GM12878 (cell line): ENCODE measurements at regions of chr18 and their contacts with region 1.

Region 1: GRCh38 chr18:10908760-10909159 is 240.6 kb downstream of the PIEZO2 start:
- DNase-seq: no peak
- ATAC-seq: no peak
- H3K4me3 ChIP-seq: no peak overlapping the region
- H3K27ac ChIP-seq: no peak overlapping the region
- H3K4me1 ChIP-seq: no peaks in the 10 kb centered on the region
- H3K27me3 ChIP-seq: no peaks in the 10 kb centered on the region
- CTCF ChIP-seq: no peak
- EP300 ChIP-seq: no peak
- POLR2A ChIP-seq: no peak
- RAD21 ChIP-seq: no peak

Region 2: GRCh38 chr18:10604182-10604581 is 304.6 kb before region 1 on chr18:
- CTCF ChIA-PET with region 1: no interaction called
- POLR2A ChIA-PET with region 1: no interaction called
- RAD21 ChIA-PET with region 1: no interaction called
- SMC1A ChIA-PET with region 1: no interaction called
- in situ Hi-C with region 1: no loop called
- intact Hi-C with region 1: no loop called
- DNase-seq: no peak
- ATAC-seq: peak; percentile 45; the same call in 1 of the 3 replicates
- H3K4me3 ChIP-seq: no peak overlapping the region
- H3K27ac ChIP-seq: no peak overlapping the region; the same call in 1 of the 2 replicates
- H3K4me1 ChIP-seq: no peaks in the 10 kb centered on the region; the same call in 1 of the 2 replicates
- H3K27me3 ChIP-seq: no peaks in the 10 kb centered on the region
- CTCF ChIP-seq: no peak
- EP300 ChIP-seq: no peak
- POLR2A ChIP-seq: no peak
- RAD21 ChIP-seq: no peak

Region 3: DNA sequence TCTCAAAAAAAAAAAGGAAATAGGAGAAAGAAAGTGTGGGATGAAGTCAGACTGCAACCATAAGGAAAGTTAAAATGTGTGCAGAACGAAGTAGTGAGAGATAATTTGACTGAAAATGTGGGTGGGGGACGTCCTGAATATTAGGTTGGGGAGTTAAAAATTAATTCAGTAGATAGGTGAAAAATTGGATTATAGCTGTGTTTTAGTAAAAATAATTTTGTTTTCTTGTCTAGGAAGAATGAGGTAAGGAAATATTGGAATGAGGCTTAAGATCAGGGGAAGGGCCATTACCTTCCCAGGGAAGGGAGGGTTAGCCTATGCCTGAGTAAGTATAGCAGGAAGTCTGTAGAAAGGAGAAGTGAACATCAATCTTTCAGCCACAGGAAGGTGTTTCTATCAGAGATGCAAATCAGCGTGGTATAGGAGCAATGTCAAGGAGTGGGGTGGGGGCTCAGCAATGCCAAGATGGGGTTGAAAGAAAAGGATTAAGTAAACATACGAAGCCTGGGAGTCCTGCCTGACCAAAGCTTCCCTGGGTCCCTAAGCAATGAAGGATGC is 10.3 kb before region 1 on chr18:
- CTCF ChIA-PET with region 1: interaction called, 3 read pairs
- POLR2A ChIA-PET with region 1: no interaction called
- RAD21 ChIA-PET with region 1: interaction called, 3 read pairs
- SMC1A ChIA-PET with region 1: interaction called, 12 read pairs
- in situ Hi-C with region 1: no loop called
- intact Hi-C with region 1: no loop called
- DNase-seq: no peak
- ATAC-seq: peak; percentile 86
- H3K4me3 ChIP-seq: peak overlapping the region; percentile 28; the same call in 1 of the 2 replicates
- H3K27ac ChIP-seq: peak overlapping the region; percentile 8; the same call in 1 of the 2 replicates
- H3K4me1 ChIP-seq: peaks cover 30% of the 10 kb centered on the region
- H3K27me3 ChIP-seq: no peaks in the 10 kb centered on the region
- CTCF ChIP-seq: no peak
- EP300 ChIP-seq: peak in 1 of 2 experiments; percentile 43; a peak in 1 of 4 replicates
- POLR2A ChIP-seq: no peak
- RAD21 ChIP-seq: no peak